Natural killer cell (primary cell): ENCODE measurements at regions of chr21 and their contacts with region 1.

Region 1: DNA sequence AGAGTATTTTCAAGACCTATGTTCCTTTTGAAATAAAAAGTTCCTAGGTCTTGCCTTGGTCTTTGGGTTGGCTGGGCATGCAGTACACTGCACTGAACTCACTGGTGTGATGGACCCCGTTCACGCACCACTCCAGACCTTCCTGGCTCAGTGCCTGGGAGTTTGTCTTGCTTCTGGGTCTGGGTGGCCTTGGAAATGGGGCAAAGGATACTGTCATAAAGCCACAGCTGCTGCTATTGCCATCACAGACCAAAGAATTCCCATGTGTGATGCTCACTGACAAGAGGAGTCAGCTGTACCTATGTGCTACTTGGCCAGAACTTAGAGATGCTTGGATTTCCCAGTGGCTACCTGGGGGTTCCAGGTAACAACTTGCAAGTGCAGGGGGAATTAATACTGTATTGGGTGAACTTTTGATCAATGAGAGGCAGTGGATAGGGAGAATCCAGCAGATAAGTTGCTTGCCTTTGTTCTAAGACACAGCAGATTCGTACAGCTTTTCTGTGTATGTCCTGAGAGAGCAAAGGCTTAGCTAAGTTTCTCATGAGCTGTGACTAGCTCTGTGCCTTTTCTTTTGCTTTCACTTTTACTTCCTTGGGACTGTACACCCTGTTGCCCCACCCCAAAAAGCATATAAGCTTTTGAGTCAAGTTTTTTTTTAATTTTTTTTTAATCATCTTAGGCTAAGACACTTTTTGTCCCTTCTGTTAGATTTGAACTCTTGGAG is 115.3 kb downstream of the RUNX1 start:
- DNase-seq: peak in 1 of 2 donors; percentile 83
- ATAC-seq: peak; percentile 88 to 93 (median 91)
- H3K4me3 ChIP-seq: peak overlapping the region; percentile 11
- H3K4me3 Mint-ChIP-seq: peak overlapping the region; percentile 78
- H3K27ac ChIP-seq: peak overlapping the region; percentile 89
- H3K27ac Mint-ChIP-seq: peak overlapping the region; percentile 93
- H3K4me1 ChIP-seq: peaks cover 29% of the 10 kb centered on the region
- H3K4me1 Mint-ChIP-seq: peaks cover 62 to 80% of the 10 kb centered on the region in 2 donors
- H3K27me3 ChIP-seq: no peaks in the 10 kb centered on the region
- H3K27me3 Mint-ChIP-seq: no peaks in the 10 kb centered on the region
- CTCF ChIP-seq: no peak

Region 2: GRCh38 chr21:35045542-35046262 is 111.9 kb after region 1 on chr21:
- intact Hi-C with region 1: loop called (anchors 1 kb)
- DNase-seq: peak; percentile 41 to 88
- ATAC-seq: peak; percentile 13 to 42 (median 23)
- H3K4me3 ChIP-seq: peak overlapping the region; percentile 56
- H3K4me3 Mint-ChIP-seq: peak overlapping the region; percentile 92
- H3K27ac ChIP-seq: peak overlapping the region; percentile 80
- H3K27ac Mint-ChIP-seq: peak overlapping the region; percentile 95 to 97
- H3K4me1 ChIP-seq: peaks cover 76% of the 10 kb centered on the region
- H3K4me1 Mint-ChIP-seq: peaks cover 100% of the 10 kb centered on the region in 2 donors
- H3K27me3 ChIP-seq: no peaks in the 10 kb centered on the region
- H3K27me3 Mint-ChIP-seq: peaks cover 0 to 5% of the 10 kb centered on the region in 2 donors
- CTCF ChIP-seq: no peak